ENCODE measurements at regions of chrX and their contacts with region 1.

Region 1: GRCh38 chrX:12974796-12975669 is at the start of gene TMSB4X:
- DNase-seq: no peak
- H3K4me3 ChIP-seq: peak within 1 kb of the TSS; percentile 81
- H3K27ac ChIP-seq: peak within 1 kb of the TSS; percentile 97
- H3K27me3 ChIP-seq: no peaks in the 10 kb centered on the region
- CTCF ChIP-seq: no peak
- polyA plus RNA-seq, gene TMSB4X: 6,551 and 6,856 TPM in 2 replicates

Region 2: GRCh38 chrX:12946838-12947544 is 28.0 kb before region 1 on chrX:
- CTCF ChIA-PET with region 1: interaction called, 12 read pairs
- POLR2A ChIA-PET with region 1: interaction called, 39 read pairs
- DNase-seq: peak; percentile 58
- H3K4me3 ChIP-seq: no peak overlapping the region
- H3K27ac ChIP-seq: peak overlapping the region; percentile 52
- H3K27me3 ChIP-seq: no peaks in the 10 kb centered on the region
- CTCF ChIP-seq: peak; percentile 95

Region 3: DNA sequence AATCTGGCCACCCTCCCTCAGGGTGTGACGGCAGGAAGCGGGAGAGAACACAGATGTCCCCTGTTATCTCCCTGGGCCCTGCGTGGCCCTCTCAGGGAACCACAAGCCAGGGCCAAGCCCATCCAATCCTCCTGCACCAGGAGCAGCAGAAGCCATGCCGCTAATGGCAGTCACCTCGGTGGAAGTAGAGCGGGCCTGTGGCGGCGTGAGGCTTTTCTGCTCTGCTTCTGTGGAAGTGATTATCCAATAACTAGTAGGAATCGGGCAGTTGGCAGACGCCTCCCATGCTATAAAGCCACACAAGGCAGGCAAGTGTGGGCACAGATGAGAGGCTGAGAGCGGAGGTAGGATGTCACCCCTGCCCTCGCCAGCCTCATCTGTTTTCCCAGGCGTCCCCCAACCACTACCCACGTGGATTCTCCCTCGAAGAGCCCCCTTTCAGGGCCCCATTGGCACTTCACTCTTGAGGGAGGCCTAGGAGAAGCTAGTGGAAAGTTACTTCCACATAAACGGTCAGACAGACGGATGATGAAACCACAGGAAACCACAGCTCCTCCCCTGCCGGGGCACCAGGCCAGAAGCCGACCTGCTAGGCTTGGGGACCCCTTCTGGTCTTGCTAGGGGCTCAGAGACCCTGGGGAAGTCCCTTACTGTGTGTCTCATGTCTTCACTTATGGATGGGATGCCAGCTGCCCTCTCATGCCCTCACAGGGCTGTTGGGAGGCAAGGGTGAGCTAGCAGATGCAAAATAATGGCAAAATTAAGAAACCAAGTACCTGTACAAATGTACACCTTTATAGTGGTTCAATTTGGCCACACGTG is 18.9 kb before region 1 on chrX:
- CTCF ChIA-PET with region 1: interaction called, 4 read pairs
- POLR2A ChIA-PET with region 1: interaction called, 20 read pairs
- DNase-seq: no peak
- H3K4me3 ChIP-seq: no peak overlapping the region
- H3K27ac ChIP-seq: peak overlapping the region; percentile 96
- H3K27me3 ChIP-seq: no peaks in the 10 kb centered on the region
- CTCF ChIP-seq: no peak

Region 4: GRCh38 chrX:13215729-13216128 is 240.7 kb after region 1 on chrX:
- CTCF ChIA-PET with region 1: no interaction called
- POLR2A ChIA-PET with region 1: interaction called, 10 read pairs
- DNase-seq: peak; percentile 7
- H3K4me3 ChIP-seq: no peak overlapping the region
- H3K27ac ChIP-seq: peak overlapping the region; percentile 68
- H3K27me3 ChIP-seq: no peaks in the 10 kb centered on the region
- CTCF ChIP-seq: no peak

Region 5: GRCh38 chrX:13432414-13433297 is 457.6 kb after region 1 on chrX:
- CTCF ChIA-PET with region 1: no interaction called
- POLR2A ChIA-PET with region 1: interaction called, 10 read pairs
- DNase-seq: peak; percentile 90
- H3K4me3 ChIP-seq: no peak overlapping the region
- H3K27ac ChIP-seq: peak overlapping the region; percentile 92
- H3K27me3 ChIP-seq: no peaks in the 10 kb centered on the region
- CTCF ChIP-seq: no peak

Region 6: GRCh38 chrX:13487731-13488523 is 512.9 kb after region 1 on chrX:
- CTCF ChIA-PET with region 1: interaction called, 9 read pairs
- POLR2A ChIA-PET with region 1: interaction called, 20 read pairs
- DNase-seq: peak; percentile 75
- H3K4me3 ChIP-seq: no peak overlapping the region
- H3K27ac ChIP-seq: peak overlapping the region; percentile 99
- H3K27me3 ChIP-seq: no peaks in the 10 kb centered on the region
- CTCF ChIP-seq: peak; percentile 50